A673 (cell line): ENCODE measurements at regions of chr3 and their contacts with region 1.

Region 1: GRCh38 chr3:194134757-194135528 is 1.0 kb upstream of the HES1 start:
- DNase-seq: peak; percentile 97
- H3K4me3 ChIP-seq: peak overlapping the region; percentile 93
- H3K27ac ChIP-seq: peak overlapping the region; percentile 98
- H3K4me1 ChIP-seq: peaks cover 29% of the 10 kb centered on the region
- H3K27me3 ChIP-seq: no peaks in the 10 kb centered on the region
- CTCF ChIP-seq: no peak

Region 2: GRCh38 chr3:193780810-193781472 is 354.0 kb before region 1 on chr3:
- CTCF ChIA-PET with region 1: interaction called, 11 read pairs
- POLR2A ChIA-PET with region 1: no interaction called
- intact Hi-C with region 1: loop called (anchors 1 kb)
- DNase-seq: peak; percentile 95
- H3K4me3 ChIP-seq: no peak overlapping the region
- H3K27ac ChIP-seq: peak overlapping the region; percentile 86
- H3K4me1 ChIP-seq: peaks cover 90% of the 10 kb centered on the region
- H3K27me3 ChIP-seq: no peaks in the 10 kb centered on the region
- CTCF ChIP-seq: peak; percentile 95

Region 3: DNA sequence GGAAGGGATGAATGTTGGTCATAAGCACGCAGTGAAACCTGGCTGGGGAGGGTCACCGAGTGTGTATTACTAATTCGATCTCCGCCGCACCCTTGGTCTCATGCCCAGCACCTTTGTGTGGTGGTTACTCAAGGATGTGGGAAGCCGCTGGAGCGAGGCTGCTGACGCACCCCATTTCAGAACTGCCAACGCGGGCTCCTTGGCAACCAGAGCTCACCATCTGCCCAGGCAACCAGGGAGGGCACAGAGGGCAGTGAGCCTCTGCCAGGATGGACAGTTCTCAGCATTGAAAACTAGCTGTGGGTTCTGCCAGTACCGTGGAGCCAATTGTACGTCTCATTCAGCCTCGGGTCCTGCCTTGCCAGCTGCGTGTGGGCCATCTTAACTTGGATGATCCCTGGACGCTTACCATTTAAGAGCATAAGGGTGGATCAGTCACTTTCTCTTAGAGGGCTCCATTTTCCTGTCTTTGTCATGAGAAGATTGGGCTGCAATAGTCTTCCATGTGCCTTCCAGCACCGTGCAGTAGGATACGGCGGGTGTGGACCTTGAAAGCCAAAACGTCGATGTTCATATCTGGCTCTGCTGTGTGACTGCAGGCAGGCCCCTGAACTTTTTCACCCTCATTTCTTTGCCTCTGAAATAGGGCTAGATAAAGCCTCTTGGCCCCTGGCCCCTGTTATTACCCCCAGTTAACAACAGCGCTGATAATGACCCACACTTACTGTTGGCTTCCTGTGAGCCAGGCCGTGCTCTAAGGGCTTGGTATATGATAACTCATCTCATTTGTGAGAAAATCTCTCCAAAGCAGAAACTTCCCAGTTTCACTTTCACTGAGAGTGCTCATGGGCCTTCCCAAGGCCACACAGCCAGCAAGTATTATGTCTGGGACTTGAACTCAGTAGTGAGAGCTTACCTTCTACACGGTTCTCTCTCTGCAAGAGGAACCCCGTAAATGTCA is 303.2 kb before region 1 on chr3:
- CTCF ChIA-PET with region 1: no interaction called
- POLR2A ChIA-PET with region 1: no interaction called
- intact Hi-C with region 1: no loop called
- DNase-seq: no peak
- H3K4me3 ChIP-seq: no peak overlapping the region
- H3K27ac ChIP-seq: peak overlapping the region; percentile 49
- H3K4me1 ChIP-seq: peaks cover 7% of the 10 kb centered on the region
- H3K27me3 ChIP-seq: no peaks in the 10 kb centered on the region
- CTCF ChIP-seq: no peak

Region 4: GRCh38 chr3:193971261-193971751 is 163.6 kb before region 1 on chr3:
- CTCF ChIA-PET with region 1: no interaction called
- POLR2A ChIA-PET with region 1: no interaction called
- intact Hi-C with region 1: loop called (anchors 10 kb)
- DNase-seq: peak; percentile 28
- H3K4me3 ChIP-seq: no peak overlapping the region
- H3K27ac ChIP-seq: no peak overlapping the region
- H3K4me1 ChIP-seq: peaks cover 28% of the 10 kb centered on the region
- H3K27me3 ChIP-seq: no peaks in the 10 kb centered on the region
- CTCF ChIP-seq: no peak

Region 5: DNA sequence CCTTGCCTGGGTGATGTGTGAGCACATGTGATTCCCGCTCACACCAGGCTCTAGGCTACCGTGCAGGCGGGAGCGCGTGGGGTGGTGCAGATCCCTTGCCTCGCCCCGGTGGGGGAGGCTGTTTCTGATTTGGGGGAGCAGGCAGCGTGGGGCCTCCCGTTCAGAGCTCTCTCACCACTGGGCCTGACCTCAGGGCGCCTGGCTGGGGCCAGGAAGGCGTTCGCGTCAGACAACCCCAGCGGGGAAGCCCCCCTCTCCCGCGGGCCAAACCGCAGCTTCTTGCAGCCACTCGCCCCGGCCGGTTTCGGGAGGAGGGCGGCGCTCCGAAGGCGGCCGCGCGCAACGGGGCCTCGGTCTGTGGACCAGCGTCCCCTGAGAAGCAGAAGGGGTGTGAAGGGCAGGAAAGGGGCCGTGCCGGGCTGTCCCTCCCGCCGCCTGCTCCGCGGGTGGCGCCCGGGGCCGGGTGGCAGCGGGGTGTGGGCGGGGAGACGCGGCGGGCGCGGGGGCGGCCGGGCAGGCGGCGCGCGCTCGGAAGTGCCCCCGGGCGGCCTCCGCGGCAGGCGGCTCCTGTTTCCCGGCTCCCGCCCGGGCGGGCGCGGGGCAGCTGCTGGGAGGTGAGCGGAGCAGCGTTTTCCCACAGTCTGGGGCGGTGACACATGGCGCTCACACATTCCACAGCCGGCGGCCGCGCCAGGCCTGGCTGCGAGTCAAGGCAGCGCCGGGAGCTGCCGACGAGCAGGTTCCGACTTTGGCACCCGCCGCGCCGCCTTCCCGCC is 64.1 kb before region 1 on chr3:
- CTCF ChIA-PET with region 1: interaction called, 3 read pairs
- POLR2A ChIA-PET with region 1: interaction called, 4 read pairs
- intact Hi-C with region 1: loop called (anchors 2 kb)
- DNase-seq: peak; percentile 93
- H3K4me3 ChIP-seq: peak overlapping the region; percentile 42
- H3K27ac ChIP-seq: peak overlapping the region; percentile 74
- H3K4me1 ChIP-seq: peaks cover 15% of the 10 kb centered on the region
- H3K27me3 ChIP-seq: no peaks in the 10 kb centered on the region
- CTCF ChIP-seq: no peak

Region 6: DNA sequence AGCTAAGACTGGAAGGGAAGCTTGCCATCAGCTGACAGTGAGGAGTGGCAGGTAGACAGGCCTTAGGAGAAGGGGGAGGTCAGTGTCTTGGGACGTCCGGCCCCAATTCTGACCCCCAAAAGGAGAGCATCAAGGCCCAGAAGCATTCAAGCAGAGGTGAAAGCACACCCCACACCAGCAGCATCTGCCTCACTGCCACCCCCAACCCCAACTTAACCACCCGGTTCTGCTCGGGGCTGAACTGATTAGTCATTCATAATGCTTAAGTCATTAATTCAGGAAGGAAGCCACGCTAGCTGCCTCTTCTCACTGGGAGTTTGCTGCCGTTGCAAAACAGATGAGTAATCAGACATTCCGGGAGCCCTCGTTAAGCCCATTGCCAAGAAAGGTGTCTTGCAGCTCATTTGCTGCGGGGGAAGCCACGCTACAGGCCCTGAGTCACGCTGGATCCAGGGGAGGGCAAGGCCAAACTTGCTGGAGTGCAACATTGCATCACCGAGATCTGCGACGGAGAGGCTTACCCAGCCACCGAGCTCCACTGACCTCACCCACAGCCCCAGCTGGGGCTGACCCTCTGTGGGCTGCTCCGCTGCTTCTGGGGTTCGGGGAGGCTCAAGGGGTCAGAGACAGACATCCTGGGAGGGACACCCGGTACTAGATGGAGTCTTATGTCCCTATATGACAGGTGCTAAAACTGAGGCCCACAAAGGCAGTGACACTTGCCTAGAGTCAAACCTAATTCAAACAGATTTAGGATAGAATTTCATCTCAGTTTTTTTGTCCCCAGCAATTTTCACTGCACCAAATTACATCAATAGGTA is 45.4 kb before region 1 on chr3:
- CTCF ChIA-PET with region 1: no interaction called
- POLR2A ChIA-PET with region 1: interaction called, 6 read pairs
- intact Hi-C with region 1: loop called (anchors 1 kb)
- DNase-seq: peak; percentile 99
- H3K4me3 ChIP-seq: no peak overlapping the region
- H3K27ac ChIP-seq: peak overlapping the region; percentile 94
- H3K4me1 ChIP-seq: peaks cover 80% of the 10 kb centered on the region
- H3K27me3 ChIP-seq: no peaks in the 10 kb centered on the region
- CTCF ChIP-seq: no peak

Region 7: GRCh38 chr3:195442573-195443390 is 1307.8 kb after region 1 on chr3 and contains the start of gene ACAP2:
- CTCF ChIA-PET with region 1: no interaction called
- POLR2A ChIA-PET with region 1: no interaction called
- intact Hi-C with region 1: loop called (anchors 10 kb)
- DNase-seq: peak; percentile 100
- H3K4me3 ChIP-seq: peak within 1 kb of the TSS; percentile 94
- H3K27ac ChIP-seq: peak within 1 kb of the TSS; percentile 92
- H3K4me1 ChIP-seq: peaks cover 22% of the 10 kb centered on the region
- H3K27me3 ChIP-seq: no peaks in the 10 kb centered on the region
- CTCF ChIP-seq: no peak
- total RNA-seq, gene ACAP2: 45.5 and 47.4 TPM in 2 replicates